Heart left ventricle (tissue), 16 donors: ENCODE measurements at regions of chr19 and their contacts with region 1.

Region 1: DNA sequence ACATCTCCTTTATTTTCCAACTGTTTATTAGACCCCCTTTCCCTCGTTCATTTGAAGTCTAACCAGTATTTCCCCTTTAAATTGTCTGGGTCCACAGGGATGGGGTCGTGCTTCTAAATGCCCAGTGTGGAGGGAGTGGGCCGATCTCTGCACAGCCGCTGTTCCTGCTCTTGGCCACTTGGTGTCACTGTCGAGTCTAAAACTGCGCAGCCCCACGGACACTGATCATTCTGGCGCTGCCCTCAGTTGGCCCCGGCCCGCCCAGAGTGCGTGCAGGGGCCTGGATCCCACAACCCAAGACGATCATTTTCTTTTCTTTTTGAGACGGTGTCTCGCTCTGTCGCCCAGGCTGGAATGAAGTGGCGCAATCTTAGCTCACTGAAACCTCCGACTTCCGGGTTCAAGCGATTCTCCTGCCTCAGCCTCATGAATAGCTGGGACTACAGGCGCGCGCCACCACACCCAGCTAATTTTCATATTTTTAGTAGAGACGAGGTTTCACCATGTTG is 12.0 kb downstream of the WDR88 start:
- DNase-seq: peak; percentile 43 to 79 (median 68)
- ATAC-seq: peak; percentile 88 to 97 (median 95)
- H3K4me3 ChIP-seq: no peak overlapping the region
- H3K27ac ChIP-seq: no peak overlapping the region
- H3K4me1 ChIP-seq: peaks cover 0 to 5% (median 0%) of the 10 kb centered on the region in 12 donors
- H3K27me3 ChIP-seq: peaks cover 0 to 7% (median 0%) of the 10 kb centered on the region in 9 donors
- CTCF ChIP-seq: peak; percentile 80 to 94 (median 90)
- POLR2A ChIP-seq: no peak

Region 2: DNA sequence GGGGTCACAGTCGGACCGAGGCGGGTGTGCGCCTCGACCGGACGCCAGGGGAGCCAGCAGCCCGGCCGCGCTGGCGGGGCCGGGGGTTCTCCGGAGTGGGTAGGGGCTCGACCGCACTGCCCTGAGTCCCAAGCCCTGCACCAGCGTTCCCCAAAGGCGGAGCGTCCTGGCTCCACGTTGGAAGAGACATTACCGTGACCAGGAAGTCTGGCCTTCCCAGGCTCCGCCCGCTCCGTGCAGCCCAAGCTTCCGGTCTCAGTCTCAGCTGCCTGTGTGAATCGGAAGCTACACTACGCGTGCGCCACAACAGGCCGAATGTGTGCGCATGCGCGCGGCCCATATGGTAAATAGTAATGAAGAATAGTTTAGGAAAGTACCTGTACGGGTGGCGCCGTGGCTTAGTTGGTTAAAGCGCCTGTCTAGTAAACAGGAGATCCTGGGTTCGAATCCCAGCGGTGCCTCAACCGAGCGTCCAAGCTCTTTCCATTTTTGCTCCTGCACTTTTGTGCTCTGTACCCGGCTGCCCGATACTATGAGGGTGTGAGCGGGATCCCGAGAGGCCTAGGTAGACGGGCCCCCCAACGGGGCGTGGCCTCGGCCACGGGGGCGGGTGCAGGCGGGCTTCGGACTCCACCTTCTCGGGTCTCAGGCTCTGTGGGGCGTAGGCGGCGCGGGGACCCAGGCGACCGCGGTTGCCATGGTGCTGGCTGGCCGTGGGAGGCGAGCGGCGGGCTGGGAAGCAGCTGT is 32.9 kb after region 1 on chr19:
- intact Hi-C with region 1: loop called in 2 of 10 experiments (anchors 5 kb)
- DNase-seq: peak; percentile 94 to 97 (median 97)
- ATAC-seq: peak; percentile 94 to 96 (median 95)
- H3K4me3 ChIP-seq: peak overlapping the region; percentile 64 to 99 (median 88)
- H3K27ac ChIP-seq: peak overlapping the region; percentile 85 to 98 (median 94)
- H3K4me1 ChIP-seq: peaks cover 0 to 32% (median 21%) of the 10 kb centered on the region in 12 donors
- H3K27me3 ChIP-seq: no peaks in the 10 kb centered on the region
- CTCF ChIP-seq: peak in 3 of 12 donors; percentile 10 to 39 (median 19)
- POLR2A ChIP-seq: peak in 1 of 2 donors; percentile 78

Region 3: GRCh38 chr19:33186431-33187182 is 42.7 kb after region 1 on chr19:
- intact Hi-C with region 1: loop called (anchors 1 to 5 kb)
- DNase-seq: peak in 2 of 5 donors; percentile 7 to 18
- ATAC-seq: peak in 1 of 4 donors; percentile 27
- H3K4me3 ChIP-seq: no peak overlapping the region
- H3K27ac ChIP-seq: no peak overlapping the region
- H3K4me1 ChIP-seq: peaks cover 0 to 6% (median 0%) of the 10 kb centered on the region in 12 donors
- H3K27me3 ChIP-seq: no peaks in the 10 kb centered on the region
- CTCF ChIP-seq: no peak
- POLR2A ChIP-seq: no peak

Region 4: DNA sequence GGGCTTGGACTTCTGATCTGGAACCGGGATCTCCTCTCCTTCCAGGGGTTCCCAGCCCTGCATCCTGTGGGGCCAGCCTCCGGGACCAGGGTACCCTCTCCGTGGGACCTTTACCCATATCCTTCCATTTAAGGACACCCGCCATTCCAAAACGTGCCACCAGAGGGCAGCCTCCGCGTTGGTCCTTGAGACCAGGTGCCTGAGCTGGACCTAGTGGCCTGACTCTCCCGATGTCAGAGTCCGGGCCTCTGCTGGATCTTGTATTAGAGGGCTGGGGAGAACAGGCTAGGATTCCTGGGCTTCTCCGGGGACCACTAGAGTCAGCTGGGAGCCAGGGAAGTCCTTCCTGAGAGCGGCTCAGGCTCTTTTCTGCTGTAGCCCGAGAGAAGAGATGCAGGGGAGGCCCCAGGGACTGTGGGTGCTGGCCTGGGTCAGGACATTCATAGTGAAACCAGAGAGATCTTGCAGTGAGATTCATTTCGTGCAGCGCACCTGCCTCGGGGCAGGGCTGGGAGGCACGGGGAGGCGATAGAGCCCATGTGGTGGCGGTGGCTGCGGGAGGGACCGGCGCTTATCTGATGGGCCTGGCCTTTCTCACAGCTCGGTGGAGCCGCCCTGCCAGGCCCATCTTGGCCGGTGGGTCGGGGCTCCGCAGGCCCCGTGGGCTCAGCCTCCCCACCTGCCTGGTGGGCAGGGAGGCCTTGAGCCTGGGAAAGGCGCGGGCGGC is 91.5 kb after region 1 on chr19:
- intact Hi-C with region 1: loop called in 1 of 10 experiments (anchors 5 kb)
- DNase-seq: peak; percentile 61 to 91 (median 77)
- ATAC-seq: peak in 3 of 4 donors; percentile 67 to 82 (median 71)
- H3K4me3 ChIP-seq: no peak overlapping the region
- H3K27ac ChIP-seq: no peak overlapping the region
- H3K4me1 ChIP-seq: peaks cover 0 to 3% (median 0%) of the 10 kb centered on the region in 12 donors
- H3K27me3 ChIP-seq: peaks cover 0 to 33% (median 6%) of the 10 kb centered on the region in 9 donors
- CTCF ChIP-seq: peak; percentile 82 to 94 (median 90)
- POLR2A ChIP-seq: no peak

Region 5: GRCh38 chr19:33690378-33691029 is 546.6 kb after region 1 on chr19:
- intact Hi-C with region 1: no loop called
- DNase-seq: peak in 1 of 5 donors; percentile 58
- ATAC-seq: no peak
- H3K4me3 ChIP-seq: no peak overlapping the region
- H3K27ac ChIP-seq: no peak overlapping the region
- H3K4me1 ChIP-seq: no peaks in the 10 kb centered on the region
- H3K27me3 ChIP-seq: peaks cover 0 to 38% (median 8%) of the 10 kb centered on the region in 9 donors
- CTCF ChIP-seq: no peak
- POLR2A ChIP-seq: no peak